CD8-positive, alpha-beta memory T cell (primary cell): ENCODE measurements at regions of chr16 and their contacts with region 1.

Region 1: GRCh38 chr16:50210266-50211038 is 55.9 kb upstream of the ADCY7 start:
- DNase-seq: peak; percentile 16 to 72 (median 45)
- H3K4me3 ChIP-seq: no peak overlapping the region
- H3K4me3 Mint-ChIP-seq: no peak overlapping the region
- H3K27ac ChIP-seq: no peak overlapping the region
- H3K27ac Mint-ChIP-seq: peak overlapping the region; percentile 7 to 89 (median 62)
- H3K4me1 ChIP-seq: no peaks in the 10 kb centered on the region
- H3K4me1 Mint-ChIP-seq: peaks cover 18 to 51% (median 32%) of the 10 kb centered on the region in 3 donors
- H3K27me3 ChIP-seq: no peaks in the 10 kb centered on the region
- H3K27me3 Mint-ChIP-seq: peaks cover 0 to 2% of the 10 kb centered on the region in 2 donors

Region 2: DNA sequence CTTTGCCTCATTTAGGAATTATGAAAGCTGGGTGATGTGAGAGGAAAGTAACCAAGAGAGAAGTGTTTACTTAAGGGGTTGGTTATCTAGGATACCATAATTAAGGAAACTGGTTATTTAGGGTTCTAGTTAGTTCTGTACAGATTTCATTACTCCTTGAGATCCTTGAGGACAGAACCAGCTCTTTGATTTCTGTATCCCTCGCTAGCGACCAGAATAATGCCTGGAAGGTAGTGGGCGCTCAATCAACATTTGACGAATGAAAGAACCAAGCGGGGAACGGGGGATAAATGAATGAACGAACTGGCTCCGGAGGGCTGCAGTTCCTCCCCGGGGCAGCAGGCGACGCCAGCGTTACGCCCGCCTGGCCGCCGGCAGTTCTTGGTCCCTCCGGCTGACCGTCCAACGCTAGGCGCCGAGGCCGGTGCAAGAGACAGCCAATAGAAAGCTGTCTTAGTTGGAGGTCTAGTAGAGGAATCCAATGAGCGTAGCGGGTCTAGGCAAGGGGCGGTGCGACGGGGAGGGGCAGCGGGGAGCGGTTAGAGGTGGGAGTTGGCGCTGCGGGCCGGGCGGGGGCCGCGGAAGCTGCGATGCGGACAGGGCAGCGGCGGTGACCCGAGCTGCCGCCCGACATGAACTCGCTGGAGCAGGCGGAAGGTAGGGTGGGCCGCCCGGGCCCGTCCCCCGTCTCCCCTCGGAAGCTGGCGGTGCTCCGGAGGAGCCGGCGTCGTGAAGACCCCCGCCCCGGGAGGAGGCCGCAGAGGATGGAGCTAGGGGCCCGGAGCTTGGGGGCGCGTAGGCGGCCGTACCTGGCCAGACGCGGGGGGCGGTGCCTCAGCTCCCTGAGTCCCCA is 185.5 kb before region 1 on chr16 and contains the start of gene CNEP1R1:
- CTCF ChIA-PET with region 1: interaction called, 43 read pairs
- POLR2A ChIA-PET with region 1: interaction called, 4 read pairs
- DNase-seq: peak; percentile 85 to 95 (median 94)
- H3K4me3 ChIP-seq: peak within 1 kb of the TSS; percentile 86
- H3K4me3 Mint-ChIP-seq: peak within 1 kb of the TSS; percentile 88 to 99 (median 97)
- H3K27ac ChIP-seq: peak within 1 kb of the TSS; percentile 71
- H3K27ac Mint-ChIP-seq: peak within 1 kb of the TSS; percentile 89 to 98 (median 94)
- H3K4me1 ChIP-seq: peaks cover 13% of the 10 kb centered on the region
- H3K4me1 Mint-ChIP-seq: peaks cover 24 to 50% (median 40%) of the 10 kb centered on the region in 3 donors
- H3K27me3 ChIP-seq: no peaks in the 10 kb centered on the region
- H3K27me3 Mint-ChIP-seq: peaks cover 0 to 4% of the 10 kb centered on the region in 2 donors
- total RNA-seq, gene CNEP1R1: 21.2 to 23.6 TPM

Region 3: GRCh38 chr16:50065624-50066481 is 144.6 kb before region 1 on chr16 and contains the start of gene HEATR3:
- CTCF ChIA-PET with region 1: interaction called, 24 read pairs
- POLR2A ChIA-PET with region 1: no interaction called
- DNase-seq: peak; percentile 87 to 95 (median 89)
- H3K4me3 ChIP-seq: peak within 1 kb of the TSS; percentile 94
- H3K4me3 Mint-ChIP-seq: peak within 1 kb of the TSS; percentile 88 to 97 (median 94)
- H3K27ac ChIP-seq: peak within 1 kb of the TSS; percentile 74
- H3K27ac Mint-ChIP-seq: peak within 1 kb of the TSS; percentile 78 to 97 (median 93)
- H3K4me1 ChIP-seq: peaks cover 24% of the 10 kb centered on the region
- H3K4me1 Mint-ChIP-seq: peaks cover 34 to 50% (median 46%) of the 10 kb centered on the region in 3 donors
- H3K27me3 ChIP-seq: no peaks in the 10 kb centered on the region
- H3K27me3 Mint-ChIP-seq: peaks cover 0 to 1% of the 10 kb centered on the region in 2 donors
- total RNA-seq, gene HEATR3: 25.5 to 26.2 TPM

Region 4: GRCh38 chr16:50136399-50136798 is 74.1 kb before region 1 on chr16:
- CTCF ChIA-PET with region 1: interaction called, 10 read pairs
- POLR2A ChIA-PET with region 1: no interaction called
- DNase-seq: no peak
- H3K4me3 ChIP-seq: no peak overlapping the region
- H3K4me3 Mint-ChIP-seq: no peak overlapping the region
- H3K27ac ChIP-seq: no peak overlapping the region
- H3K27ac Mint-ChIP-seq: no peak overlapping the region
- H3K4me1 ChIP-seq: no peaks in the 10 kb centered on the region
- H3K4me1 Mint-ChIP-seq: no peaks in the 10 kb centered on the region
- H3K27me3 ChIP-seq: no peaks in the 10 kb centered on the region
- H3K27me3 Mint-ChIP-seq: peaks cover 0 to 4% of the 10 kb centered on the region in 2 donors

Region 5: GRCh38 chr16:50166511-50167500 is 43.6 kb before region 1 on chr16:
- CTCF ChIA-PET with region 1: interaction called, 11 read pairs
- POLR2A ChIA-PET with region 1: interaction called, 4 read pairs
- DNase-seq: no peak
- H3K4me3 ChIP-seq: no peak overlapping the region
- H3K4me3 Mint-ChIP-seq: peak overlapping the region in 5 of 7 donors; percentile 44 to 62 (median 58)
- H3K27ac ChIP-seq: no peak overlapping the region
- H3K27ac Mint-ChIP-seq: peak overlapping the region in 7 of 8 donors; percentile 17 to 70 (median 58)
- H3K4me1 ChIP-seq: peaks cover 46% of the 10 kb centered on the region
- H3K4me1 Mint-ChIP-seq: peaks cover 52 to 71% (median 62%) of the 10 kb centered on the region in 3 donors
- H3K27me3 ChIP-seq: no peaks in the 10 kb centered on the region
- H3K27me3 Mint-ChIP-seq: no peaks in the 10 kb centered on the region

Region 6: DNA sequence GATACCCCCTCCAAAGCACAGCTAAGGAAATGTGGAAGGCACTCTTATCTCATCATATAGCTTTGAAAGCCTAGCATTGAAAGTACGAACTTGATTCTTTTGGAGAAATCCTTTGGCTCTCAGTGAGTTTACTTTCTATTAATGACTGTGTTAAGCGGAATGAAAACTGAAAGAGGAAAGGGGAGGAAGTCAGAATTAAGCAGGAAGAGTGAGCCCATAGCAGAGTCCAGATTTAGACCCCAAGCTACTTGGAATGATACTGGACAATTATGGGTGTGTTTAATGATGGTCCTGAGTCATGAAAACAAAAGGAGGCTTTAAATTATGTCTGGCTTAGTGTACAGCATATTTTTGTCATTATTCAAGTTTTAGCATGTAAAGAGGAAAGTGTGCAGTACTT is 15.2 kb before region 1 on chr16:
- CTCF ChIA-PET with region 1: interaction called, 18 read pairs
- POLR2A ChIA-PET with region 1: interaction called, 5 read pairs
- DNase-seq: no peak
- H3K4me3 ChIP-seq: no peak overlapping the region
- H3K4me3 Mint-ChIP-seq: peak overlapping the region in 3 of 7 donors; percentile 9 to 41 (median 9)
- H3K27ac ChIP-seq: no peak overlapping the region
- H3K27ac Mint-ChIP-seq: peak overlapping the region in 7 of 8 donors; percentile 22 to 86 (median 44)
- H3K4me1 ChIP-seq: peaks cover 31% of the 10 kb centered on the region
- H3K4me1 Mint-ChIP-seq: peaks cover 57 to 83% (median 82%) of the 10 kb centered on the region in 3 donors
- H3K27me3 ChIP-seq: no peaks in the 10 kb centered on the region
- H3K27me3 Mint-ChIP-seq: no peaks in the 10 kb centered on the region

Region 7: GRCh38 chr16:50354629-50355456 is 144.4 kb after region 1 on chr16:
- CTCF ChIA-PET with region 1: interaction called, 60 read pairs
- POLR2A ChIA-PET with region 1: no interaction called
- DNase-seq: peak in 2 of 5 donors; percentile 35 to 51
- H3K4me3 ChIP-seq: no peak overlapping the region
- H3K4me3 Mint-ChIP-seq: no peak overlapping the region
- H3K27ac ChIP-seq: no peak overlapping the region
- H3K27ac Mint-ChIP-seq: peak overlapping the region in 6 of 8 donors; percentile 0 to 91 (median 39)
- H3K4me1 ChIP-seq: peaks cover 15% of the 10 kb centered on the region
- H3K4me1 Mint-ChIP-seq: peaks cover 12 to 48% (median 33%) of the 10 kb centered on the region in 3 donors
- H3K27me3 ChIP-seq: no peaks in the 10 kb centered on the region
- H3K27me3 Mint-ChIP-seq: no peaks in the 10 kb centered on the region